Heart left ventricle (tissue), 16 donors: ENCODE measurements at regions of chr6 and their contacts with region 1.

Region 1: GRCh38 chr6:75208298-75209183 is 2.7 kb upstream of the COL12A1 start:
- DNase-seq: peak; percentile 81 to 87 (median 85)
- ATAC-seq: peak; percentile 62 to 82 (median 70)
- H3K4me3 ChIP-seq: peak overlapping the region in 10 of 12 donors; percentile 17 to 53 (median 36)
- H3K27ac ChIP-seq: peak overlapping the region in 8 of 12 donors; percentile 31 to 80 (median 56)
- H3K4me1 ChIP-seq: peaks cover 0 to 64% (median 33%) of the 10 kb centered on the region in 12 donors
- H3K27me3 ChIP-seq: peaks cover 2 to 50% (median 25%) of the 10 kb centered on the region in 9 donors
- CTCF ChIP-seq: peak; percentile 78 to 95 (median 87)
- POLR2A ChIP-seq: no peak

Region 2: GRCh38 chr6:73747289-73747688 is 1461.3 kb before region 1 on chr6:
- intact Hi-C with region 1: loop called in 3 of 10 experiments (anchors 5 kb)
- DNase-seq: no peak
- ATAC-seq: no peak
- H3K4me3 ChIP-seq: peak overlapping the region in 2 of 12 donors; percentile 10 to 19
- H3K27ac ChIP-seq: peak overlapping the region in 1 of 12 donors; percentile 43
- H3K4me1 ChIP-seq: peaks cover 0 to 10% (median 0%) of the 10 kb centered on the region in 12 donors
- H3K27me3 ChIP-seq: no peaks in the 10 kb centered on the region
- CTCF ChIP-seq: no peak
- POLR2A ChIP-seq: no peak

Region 3: DNA sequence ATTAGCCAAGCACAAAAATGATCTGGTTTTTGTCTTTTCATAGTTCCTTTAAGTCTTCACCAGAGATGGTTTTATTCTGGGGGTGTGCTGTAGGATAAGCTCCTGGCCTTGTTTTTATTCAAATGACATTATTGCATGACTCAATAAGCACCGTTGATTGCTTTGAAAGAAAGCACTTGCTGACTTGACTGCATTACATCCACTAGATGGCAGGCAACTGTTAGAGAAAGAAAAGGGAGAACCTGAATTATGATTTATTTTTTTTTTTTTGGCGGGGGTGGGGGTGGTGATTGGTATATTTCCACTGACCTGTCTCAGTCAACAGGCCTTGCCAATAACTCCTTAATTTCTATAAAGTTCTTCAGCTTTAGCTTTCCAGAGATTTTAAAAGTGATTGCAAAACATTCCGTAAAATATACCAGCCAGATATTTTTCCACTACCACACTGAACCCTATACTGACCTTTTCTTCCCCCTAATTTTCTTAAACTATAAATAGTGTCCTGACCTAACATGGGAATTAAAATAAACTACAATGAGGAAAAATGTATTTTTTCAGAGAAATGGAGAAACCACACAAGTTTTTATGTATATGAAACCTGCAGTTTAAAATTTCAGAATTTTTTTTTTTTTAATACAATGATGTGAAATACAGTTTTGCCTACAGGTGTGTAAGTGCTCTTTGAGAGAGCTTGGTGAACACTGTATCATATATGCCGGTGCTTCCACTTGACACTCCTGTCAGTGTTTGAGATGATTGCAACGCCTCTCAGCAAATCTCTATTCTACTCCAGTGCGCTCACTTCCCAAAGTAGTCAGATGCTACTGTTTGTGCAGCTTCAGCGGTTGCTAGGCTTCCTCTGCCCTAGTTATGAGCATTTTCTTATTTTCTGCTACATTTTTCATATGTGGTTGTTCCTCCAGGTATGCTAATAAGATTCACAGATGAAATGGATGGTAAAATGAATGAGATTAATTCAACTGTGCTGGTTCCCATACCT is 1238.3 kb before region 1 on chr6:
- intact Hi-C with region 1: loop called in 9 of 10 experiments (anchors 5 to 10 kb)
- DNase-seq: no peak
- ATAC-seq: peak in 1 of 4 donors; percentile 31
- H3K4me3 ChIP-seq: no peak overlapping the region
- H3K27ac ChIP-seq: no peak overlapping the region
- H3K4me1 ChIP-seq: peaks cover 0 to 12% (median 0%) of the 10 kb centered on the region in 12 donors
- H3K27me3 ChIP-seq: no peaks in the 10 kb centered on the region
- CTCF ChIP-seq: peak; percentile 21 to 67 (median 49)
- POLR2A ChIP-seq: no peak

Region 4: GRCh38 chr6:74357321-74357720 is 851.2 kb before region 1 on chr6:
- intact Hi-C with region 1: loop called in 1 of 10 experiments (anchors 10 kb)
- DNase-seq: no peak
- ATAC-seq: peak in 1 of 4 donors; percentile 59
- H3K4me3 ChIP-seq: no peak overlapping the region
- H3K27ac ChIP-seq: peak overlapping the region in 2 of 12 donors; percentile 1 to 6
- H3K4me1 ChIP-seq: peaks cover 0 to 5% (median 0%) of the 10 kb centered on the region in 12 donors
- H3K27me3 ChIP-seq: no peaks in the 10 kb centered on the region
- CTCF ChIP-seq: no peak
- POLR2A ChIP-seq: no peak

Region 5: GRCh38 chr6:74557236-74557635 is 651.3 kb before region 1 on chr6:
- intact Hi-C with region 1: no loop called
- DNase-seq: no peak
- ATAC-seq: no peak
- H3K4me3 ChIP-seq: no peak overlapping the region
- H3K27ac ChIP-seq: no peak overlapping the region
- H3K4me1 ChIP-seq: no peaks in the 10 kb centered on the region
- H3K27me3 ChIP-seq: no peaks in the 10 kb centered on the region
- CTCF ChIP-seq: no peak
- POLR2A ChIP-seq: no peak

Region 6: GRCh38 chr6:74749211-74750142 is 459.1 kb before region 1 on chr6:
- intact Hi-C with region 1: loop called in 7 of 10 experiments (anchors 2 to 10 kb)
- DNase-seq: no peak
- ATAC-seq: peak in 1 of 4 donors; percentile 29
- H3K4me3 ChIP-seq: no peak overlapping the region
- H3K27ac ChIP-seq: peak overlapping the region in 1 of 12 donors; percentile 26
- H3K4me1 ChIP-seq: no peaks in the 10 kb centered on the region
- H3K27me3 ChIP-seq: no peaks in the 10 kb centered on the region
- CTCF ChIP-seq: no peak
- POLR2A ChIP-seq: no peak